Dorsolateral prefrontal cortex (tissue), 120 donors: ENCODE measurements at regions of chr11 and their contacts with region 1.

Region 1: GRCh38 chr11:47269002-47269828 is 718 bp upstream of the MADD start:
- DNase-seq: peak; percentile 76 to 93 (median 86)
- H3K4me3 ChIP-seq: peak overlapping the region; percentile 45 to 99 (median 80)
- H3K27ac ChIP-seq: peak overlapping the region; percentile 92 to 100 (median 99)
- H3K27me3 ChIP-seq: no peaks in the 10 kb centered on the region
- CTCF ChIP-seq: peak in 33 of 56 donors; percentile 4 to 45 (median 20)

Region 2: DNA sequence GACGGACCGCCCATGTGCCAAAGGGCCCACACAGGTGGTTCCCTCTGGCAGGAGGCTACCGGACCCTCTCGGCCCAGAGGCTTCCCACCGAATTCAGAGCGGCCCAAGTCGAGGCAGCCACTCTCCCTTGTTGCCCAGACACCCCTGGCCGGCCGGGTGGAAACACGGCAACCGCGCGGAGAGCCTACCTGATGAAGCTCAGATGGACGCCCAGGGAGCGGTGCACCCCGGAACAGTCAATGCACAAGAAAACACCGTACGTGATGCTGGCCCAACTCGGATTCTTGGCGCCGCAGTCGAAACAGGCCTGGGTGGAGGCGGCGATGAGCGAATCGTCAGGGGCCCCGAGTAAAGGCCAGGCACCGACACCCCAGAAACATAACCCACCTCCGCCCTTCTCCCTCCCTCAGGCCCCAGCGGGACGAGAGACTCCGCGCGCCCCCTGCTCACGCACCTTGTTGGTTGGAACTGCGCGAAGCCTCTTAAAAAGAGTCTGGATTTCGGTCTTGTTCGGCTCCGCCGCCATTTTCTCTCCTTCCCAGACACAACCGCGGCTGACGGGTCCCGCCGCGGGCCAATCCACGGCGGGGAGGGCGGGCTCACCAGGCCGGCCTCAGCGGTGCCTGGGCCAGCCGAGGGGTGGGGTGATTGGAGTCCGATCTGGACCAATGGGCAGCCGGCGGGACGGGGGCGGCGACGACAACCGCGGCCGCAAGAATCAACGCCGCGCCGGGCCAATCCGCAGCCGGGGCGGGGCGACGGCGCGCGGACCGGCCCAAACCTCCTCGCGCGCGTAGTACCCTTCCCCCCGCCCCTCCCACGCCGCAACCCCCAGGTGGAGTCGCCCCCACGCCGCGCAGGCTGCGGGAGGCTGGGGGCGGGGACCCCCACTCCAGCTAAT is 92.6 kb before region 1 on chr11 and contains the start of gene ARFGAP2:
- intact Hi-C with region 1: loop called (anchors 2 kb)
- DNase-seq: peak; percentile 96 to 99 (median 98)
- H3K4me3 ChIP-seq: peak within 1 kb of the TSS; percentile 67 to 100 (median 96)
- H3K27ac ChIP-seq: peak within 1 kb of the TSS; percentile 97 to 100 (median 100)
- H3K27me3 ChIP-seq: no peaks in the 10 kb centered on the region
- CTCF ChIP-seq: peak in 1 of 56 donors; percentile 24
- total RNA-seq, gene ARFGAP2: 84.8 to 149 (median 114) TPM

Region 3: DNA sequence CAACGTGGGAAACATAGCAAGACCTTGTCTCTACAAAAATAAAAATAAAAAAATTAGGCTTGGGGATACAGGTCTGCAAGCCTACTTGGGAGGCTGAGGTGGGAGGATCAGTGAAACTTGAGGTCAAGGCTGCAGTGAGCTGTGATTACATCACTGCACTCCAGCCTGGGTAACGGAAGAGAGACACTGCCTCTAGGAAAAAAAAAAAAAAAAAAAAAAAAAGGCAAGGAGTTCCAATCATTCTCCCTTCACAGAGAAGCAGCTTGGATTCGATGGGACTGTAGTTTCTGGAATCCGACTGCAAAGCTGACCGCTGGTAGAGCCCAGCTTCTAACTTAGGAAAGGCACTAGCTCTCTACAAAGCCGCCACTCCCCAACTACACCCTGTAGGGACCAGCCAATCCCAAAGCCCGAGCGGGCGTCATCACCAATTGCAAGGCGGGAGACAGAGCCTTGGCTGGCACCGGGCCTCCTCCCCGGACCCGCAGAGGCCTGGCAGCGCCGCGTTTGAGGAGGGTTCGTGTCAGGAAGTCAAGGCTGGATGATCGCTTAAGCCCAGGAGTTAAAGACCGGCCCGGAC is 55.1 kb before region 1 on chr11:
- intact Hi-C with region 1: loop called in 1 of 2 experiments (anchors 2 kb)
- DNase-seq: peak; percentile 93 to 98 (median 97)
- H3K4me3 ChIP-seq: peak overlapping the region; percentile 46 to 92 (median 75)
- H3K27ac ChIP-seq: peak overlapping the region; percentile 82 to 100 (median 98)
- H3K27me3 ChIP-seq: no peaks in the 10 kb centered on the region
- CTCF ChIP-seq: peak in 13 of 56 donors; percentile 3 to 36 (median 17)

Region 4: GRCh38 chr11:47248664-47249377 is 20.4 kb before region 1 on chr11 and contains the start of gene ACP2:
- intact Hi-C with region 1: loop called in 1 of 2 experiments (anchors 1 kb)
- DNase-seq: peak; percentile 85 to 95 (median 93)
- H3K4me3 ChIP-seq: peak within 1 kb of the TSS; percentile 64 to 96 (median 87)
- H3K27ac ChIP-seq: peak within 1 kb of the TSS; percentile 32 to 97 (median 91)
- H3K27me3 ChIP-seq: no peaks in the 10 kb centered on the region
- CTCF ChIP-seq: peak in 49 of 56 donors; percentile 7 to 71 (median 42)
- total RNA-seq, gene ACP2: 23.3 to 58.3 (median 37.1) TPM

Region 5: DNA sequence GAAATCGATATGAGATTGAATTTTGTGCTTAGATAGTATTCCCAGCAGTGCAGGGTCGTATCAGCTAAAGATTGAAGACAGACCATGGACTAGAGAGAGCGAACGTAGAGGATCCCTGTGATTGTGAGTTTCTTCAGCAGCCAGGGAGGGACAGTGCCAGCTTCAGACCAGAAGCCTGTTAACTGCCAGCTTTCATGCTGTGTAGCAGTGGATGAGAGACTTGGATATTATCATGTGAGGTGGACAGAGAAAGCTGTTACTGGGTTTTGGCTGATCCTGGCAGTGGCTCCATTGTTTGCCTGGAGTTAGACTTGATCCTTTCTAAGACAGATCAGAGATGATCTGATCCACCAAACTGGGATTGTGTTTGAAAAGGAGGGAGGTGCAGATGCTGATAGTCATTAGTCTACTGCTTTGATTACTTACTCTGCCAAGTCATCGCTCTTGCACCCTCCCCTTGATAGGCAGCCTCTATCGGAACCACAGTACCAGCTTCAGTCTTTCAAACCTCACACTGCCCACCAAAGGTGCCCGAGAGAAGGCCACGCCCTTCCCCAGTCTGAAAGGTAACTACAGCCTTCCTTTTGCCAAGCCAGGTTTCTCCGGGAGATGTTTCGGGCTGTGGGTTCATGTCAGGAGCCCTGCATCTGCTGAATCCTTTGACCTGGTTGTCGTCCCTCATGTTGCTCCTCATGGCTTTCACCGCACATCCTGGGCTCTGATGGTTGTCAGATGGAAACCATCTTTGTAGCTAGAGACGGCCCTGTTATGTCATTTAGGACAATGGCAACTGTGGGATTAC is 17.0 kb after region 1 on chr11:
- intact Hi-C with region 1: no loop called
- DNase-seq: peak in 1 of 10 donors; percentile 27
- H3K4me3 ChIP-seq: no peak overlapping the region
- H3K27ac ChIP-seq: no peak overlapping the region
- H3K27me3 ChIP-seq: no peaks in the 10 kb centered on the region
- CTCF ChIP-seq: no peak

Region 6: DNA sequence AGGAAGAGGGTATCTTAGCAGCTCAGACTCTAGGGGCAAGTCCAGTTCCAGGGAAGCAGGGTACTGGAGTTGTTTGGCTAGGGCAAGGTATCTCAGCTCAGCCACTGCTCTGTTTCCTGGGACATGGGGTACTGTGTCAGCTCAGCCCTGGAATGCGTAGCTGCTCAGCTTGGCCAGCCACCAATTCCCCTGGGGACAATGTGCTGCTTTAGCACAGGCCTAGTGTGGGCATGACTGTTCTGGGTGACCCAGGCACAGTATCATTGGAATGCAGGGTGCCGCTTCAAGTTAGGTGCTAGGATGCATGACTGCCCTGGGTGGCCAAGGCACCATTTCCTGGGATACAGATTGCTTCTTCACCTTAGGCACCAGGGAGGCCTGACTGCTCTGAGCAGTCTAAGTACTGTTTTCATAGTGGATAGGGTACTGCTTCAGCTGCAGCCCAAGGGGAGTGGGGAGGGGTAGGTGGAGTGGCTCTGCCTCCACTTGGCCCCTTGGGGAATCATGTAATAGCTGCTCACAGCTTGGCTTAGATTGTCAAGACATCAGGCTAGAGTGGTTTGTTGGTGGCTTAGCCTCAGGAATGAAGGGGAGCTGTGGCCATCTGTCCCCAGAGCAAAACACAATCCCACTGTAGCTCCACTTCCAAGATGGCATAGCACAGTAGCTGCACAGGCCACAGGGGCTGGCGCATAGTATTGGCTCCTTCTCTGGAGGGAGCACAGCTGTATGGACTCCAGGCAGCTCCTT is 36.7 kb after region 1 on chr11:
- intact Hi-C with region 1: loop called in 1 of 2 experiments (anchors 5 kb)
- DNase-seq: peak; percentile 14 to 85 (median 74)
- H3K4me3 ChIP-seq: peak overlapping the region in 1 of 59 donors; percentile 2
- H3K27ac ChIP-seq: peak overlapping the region; percentile 17 to 94 (median 85)
- H3K27me3 ChIP-seq: no peaks in the 10 kb centered on the region
- CTCF ChIP-seq: no peak

Region 7: GRCh38 chr11:47355283-47356128 is 86.3 kb after region 1 on chr11:
- intact Hi-C with region 1: loop called in 1 of 2 experiments (anchors 5 kb)
- DNase-seq: peak; percentile 88 to 94 (median 92)
- H3K4me3 ChIP-seq: peak overlapping the region; percentile 49 to 80 (median 65)
- H3K27ac ChIP-seq: peak overlapping the region in 40 of 59 donors; percentile 16 to 83 (median 62)
- H3K27me3 ChIP-seq: no peaks in the 10 kb centered on the region
- CTCF ChIP-seq: peak; percentile 36 to 98 (median 90)

Region 8: DNA sequence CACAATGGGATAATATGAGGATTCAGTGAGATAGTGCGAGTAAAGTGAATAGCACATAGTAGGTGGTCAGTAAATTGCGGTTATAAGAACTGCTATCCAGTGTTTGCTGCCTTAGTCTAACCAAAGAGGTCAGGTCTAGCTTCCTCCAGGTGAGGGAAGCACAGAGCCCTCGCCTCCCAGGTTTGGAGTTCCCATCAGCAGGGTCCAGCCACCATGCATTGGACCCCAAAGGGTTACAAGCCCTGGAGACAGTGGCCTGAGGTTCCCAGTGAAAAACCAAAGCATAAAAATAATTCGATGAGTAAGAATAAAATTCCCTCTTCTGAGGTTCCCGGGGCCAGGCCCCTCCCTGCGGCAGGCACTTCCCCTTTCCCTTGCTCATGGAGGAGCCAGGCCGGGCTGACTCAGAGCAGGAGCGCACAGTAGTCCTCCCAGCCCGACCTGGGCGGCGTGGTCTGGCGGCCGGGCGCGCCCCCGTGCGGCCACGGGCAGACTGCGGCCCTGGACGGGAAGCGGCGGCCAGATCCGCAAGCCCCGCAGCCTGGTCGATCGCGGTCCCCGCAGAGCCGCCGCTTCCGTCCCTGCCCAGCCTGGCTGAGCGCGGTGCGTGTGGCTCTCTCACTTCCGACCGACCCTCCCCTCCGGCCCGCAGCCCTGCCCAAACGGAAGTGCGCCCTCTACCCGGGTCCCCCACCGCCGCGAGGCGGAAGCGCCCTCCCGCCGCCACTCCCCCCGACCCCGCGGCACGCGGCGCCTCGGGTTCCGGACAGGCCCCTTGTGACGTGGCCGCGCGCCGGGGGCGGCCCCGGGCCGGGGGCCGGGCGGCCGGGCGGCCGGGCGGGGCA is 138.8 kb after region 1 on chr11 and contains the start of gene SLC39A13:
- intact Hi-C with region 1: loop called in 1 of 2 experiments (anchors 5 kb)
- DNase-seq: peak; percentile 81 to 97 (median 92)
- H3K4me3 ChIP-seq: peak within 1 kb of the TSS; percentile 59 to 92 (median 80)
- H3K27ac ChIP-seq: peak within 1 kb of the TSS; percentile 83 to 99 (median 96)
- H3K27me3 ChIP-seq: no peaks in the 10 kb centered on the region
- CTCF ChIP-seq: peak; percentile 66 to 98 (median 86)
- total RNA-seq, gene SLC39A13: 29.5 to 62.3 (median 39.7) TPM